Activated CD4-positive, alpha-beta T cell treated with anti-CD3 and anti-CD28 coated beads, Interleukin-2, amount 10 ng/mL, durations not matched to agents 24 days and 14 days (primary cell): ENCODE measurements at regions of chr20 and their contacts with region 1.

Region 1: DNA sequence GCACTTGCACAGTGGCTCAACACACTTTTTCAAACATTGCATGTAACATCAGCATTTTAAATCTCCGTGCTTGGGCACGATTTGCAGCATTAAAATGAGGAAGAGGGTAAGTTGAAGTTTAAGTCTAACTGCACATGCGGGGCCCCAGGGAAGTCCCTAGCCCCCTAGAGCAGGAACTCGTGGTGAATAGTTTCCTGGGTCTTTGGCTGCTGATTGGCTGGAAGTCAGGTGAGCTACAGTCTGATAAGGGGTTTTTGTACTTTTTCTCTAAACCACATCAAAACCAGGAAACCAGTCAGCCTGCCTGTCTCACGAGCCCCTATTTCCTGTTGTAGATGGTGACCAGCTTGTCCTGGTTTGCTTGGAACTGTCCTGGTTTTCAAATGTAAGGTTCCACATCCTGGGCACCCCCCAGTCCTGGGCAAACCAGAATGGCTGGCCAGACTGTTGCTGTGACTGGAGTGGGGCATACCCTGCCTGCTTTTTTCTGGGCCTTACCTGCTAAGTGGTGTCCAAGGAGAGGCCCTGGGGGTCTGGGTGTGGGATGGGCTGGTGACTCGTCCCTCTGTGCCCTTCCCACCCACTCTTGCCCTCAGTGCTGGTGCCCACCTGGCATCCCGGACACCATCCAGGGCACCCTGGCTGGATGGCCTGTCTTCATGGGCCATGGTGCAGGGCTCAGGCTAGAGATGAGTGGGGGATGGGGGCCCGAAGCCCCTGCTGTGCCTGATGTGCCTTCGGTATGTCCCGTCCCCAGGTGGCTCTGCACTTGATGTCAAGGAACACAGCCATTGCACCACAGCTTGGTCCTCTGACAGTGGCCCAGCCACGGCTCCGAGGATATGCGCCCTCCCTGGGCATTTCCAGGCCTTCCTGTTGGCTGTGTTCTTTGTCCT is 31.8 kb downstream of the SUN5 start:
- DNase-seq: peak; percentile 94
- H3K4me3 Mint-ChIP-seq: no peak overlapping the region
- H3K27ac Mint-ChIP-seq: no peak overlapping the region
- H3K4me1 Mint-ChIP-seq: peaks cover 32% of the 10 kb centered on the region
- H3K27me3 Mint-ChIP-seq: no peaks in the 10 kb centered on the region

Region 2: DNA sequence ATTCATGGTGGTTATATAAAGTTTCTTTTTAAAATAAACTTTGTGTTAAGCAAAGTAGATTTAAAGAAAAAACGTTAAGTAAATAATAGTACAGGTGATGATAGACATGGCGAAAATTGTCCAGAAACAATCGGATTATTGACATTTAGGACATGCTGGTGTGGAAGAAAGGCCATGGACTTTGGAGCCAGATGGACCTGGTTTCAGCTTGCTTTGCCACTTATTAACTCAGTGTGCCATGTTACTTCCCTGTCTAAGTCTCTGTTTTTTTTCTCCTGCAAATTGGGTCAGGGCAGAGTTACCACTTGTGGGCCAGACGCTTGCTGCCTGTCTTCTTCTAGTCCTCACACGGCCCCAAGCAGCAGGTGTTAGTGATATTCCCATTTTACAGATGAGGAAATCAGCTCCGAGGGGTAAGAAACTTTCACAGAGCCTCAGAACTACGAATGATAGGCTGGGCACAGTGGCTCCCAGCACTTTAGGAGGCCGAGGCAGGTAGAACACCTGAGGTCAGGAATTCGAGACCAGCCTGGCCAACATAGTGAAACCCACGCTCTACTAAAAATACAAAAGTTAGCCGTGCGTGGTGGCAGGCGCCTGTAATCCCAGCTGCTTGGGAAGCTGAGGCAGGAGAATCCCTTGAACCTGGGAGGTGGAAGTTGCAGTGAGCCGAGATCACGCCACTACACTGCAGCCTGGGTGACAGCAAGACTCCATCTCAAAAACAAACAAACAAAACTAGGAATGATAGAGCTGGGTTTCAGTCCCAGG is 682.6 kb before region 1 on chr20:
- intact Hi-C with region 1: no loop called
- DNase-seq: no peak
- H3K4me3 Mint-ChIP-seq: no peak overlapping the region
- H3K27ac Mint-ChIP-seq: no peak overlapping the region
- H3K4me1 Mint-ChIP-seq: peaks cover 40% of the 10 kb centered on the region
- H3K27me3 Mint-ChIP-seq: no peaks in the 10 kb centered on the region

Region 3: GRCh38 chr20:32819992-32820710 is 152.3 kb before region 1 on chr20:
- intact Hi-C with region 1: loop called (anchors 5 kb)
- DNase-seq: no peak
- H3K4me3 Mint-ChIP-seq: peak overlapping the region; percentile 91
- H3K27ac Mint-ChIP-seq: peak overlapping the region; percentile 93
- H3K4me1 Mint-ChIP-seq: peaks cover 37% of the 10 kb centered on the region
- H3K27me3 Mint-ChIP-seq: no peaks in the 10 kb centered on the region